ENCODE measurements at regions of chr2 and their contacts with region 1.

Region 1: GRCh38 chr2:100142393-100142792 is at the start of gene AFF3:
- DNase-seq: peak in 1 of 2 donors; percentile 29
- H3K4me3 ChIP-seq: no peak within 1 kb of the TSS
- H3K27ac ChIP-seq: no peak within 1 kb of the TSS
- H3K4me1 ChIP-seq: no peaks in the 10 kb centered on the region
- H3K27me3 ChIP-seq: no peaks in the 10 kb centered on the region
- CTCF ChIP-seq: no peak

Region 2: GRCh38 chr2:100121124-100121718 is 21.2 kb before region 1 on chr2:
- intact Hi-C with region 1: loop called (anchors 2 kb)
- DNase-seq: no peak
- H3K4me3 ChIP-seq: no peak overlapping the region
- H3K27ac ChIP-seq: no peak overlapping the region
- H3K4me1 ChIP-seq: peaks cover 0 to 4% (median 1%) of the 10 kb centered on the region in 4 donors
- H3K27me3 ChIP-seq: no peaks in the 10 kb centered on the region
- CTCF ChIP-seq: no peak

Measured in tibial artery (tissue), 4 donors.